ENCODE measurements at regions of chr6 and their contacts with region 1.

Region 1: GRCh38 chr6:130676077-130676772 is 151.0 kb upstream of the SMLR1 start:
- DNase-seq: no peak
- H3K4me3 Mint-ChIP-seq: no peak overlapping the region
- H3K27ac Mint-ChIP-seq: no peak overlapping the region
- H3K4me1 Mint-ChIP-seq: peaks cover 17% of the 10 kb centered on the region
- H3K27me3 Mint-ChIP-seq: no peaks in the 10 kb centered on the region
- CTCF ChIP-seq: no peak

Region 2: DNA sequence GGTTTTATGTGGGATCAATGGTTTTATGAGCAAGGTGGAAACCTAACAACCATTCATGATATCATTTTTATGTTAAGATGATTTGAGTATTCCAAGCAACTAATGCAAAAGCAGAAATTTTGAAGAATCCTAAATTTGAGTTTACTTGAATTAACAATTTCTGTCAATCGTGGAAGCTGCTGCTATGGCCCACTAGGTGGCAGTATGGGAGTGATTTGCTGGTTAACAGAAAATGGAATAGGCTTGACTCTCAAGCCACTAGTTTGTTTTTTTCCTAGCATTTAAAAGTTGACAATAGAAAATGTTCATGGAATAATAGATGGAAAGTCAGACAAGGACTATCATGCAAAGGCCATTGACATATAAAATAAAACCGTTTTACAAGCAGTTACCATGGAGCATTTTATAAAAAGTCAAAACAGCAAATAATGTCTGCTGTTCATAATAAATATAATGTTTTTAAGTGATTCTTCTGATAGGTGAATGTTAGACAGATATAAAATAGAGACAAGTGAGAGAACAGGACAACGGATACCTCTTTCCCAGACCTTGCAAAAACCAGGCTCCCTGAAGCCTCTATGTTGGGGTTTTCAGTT is 353.5 kb before region 1 on chr6:
- CTCF ChIA-PET with region 1: interaction called, 11 read pairs
- POLR2A ChIA-PET with region 1: interaction called, 3 read pairs
- intact Hi-C with region 1: no loop called
- DNase-seq: peak; percentile 64
- H3K4me3 Mint-ChIP-seq: no peak overlapping the region
- H3K27ac Mint-ChIP-seq: no peak overlapping the region
- H3K4me1 Mint-ChIP-seq: peaks cover 9% of the 10 kb centered on the region
- H3K27me3 Mint-ChIP-seq: peaks cover 24% of the 10 kb centered on the region
- CTCF ChIP-seq: peak; percentile 78